Right ventricle myocardium superior (tissue), 1 donor: ENCODE measurements at regions of chr2 and their contacts with region 1.

Region 1: GRCh38 chr2:136378712-136379595 is 261.0 kb upstream of the CXCR4 start:
- DNase-seq: no peak
- ATAC-seq: peak; percentile 71

Region 2: DNA sequence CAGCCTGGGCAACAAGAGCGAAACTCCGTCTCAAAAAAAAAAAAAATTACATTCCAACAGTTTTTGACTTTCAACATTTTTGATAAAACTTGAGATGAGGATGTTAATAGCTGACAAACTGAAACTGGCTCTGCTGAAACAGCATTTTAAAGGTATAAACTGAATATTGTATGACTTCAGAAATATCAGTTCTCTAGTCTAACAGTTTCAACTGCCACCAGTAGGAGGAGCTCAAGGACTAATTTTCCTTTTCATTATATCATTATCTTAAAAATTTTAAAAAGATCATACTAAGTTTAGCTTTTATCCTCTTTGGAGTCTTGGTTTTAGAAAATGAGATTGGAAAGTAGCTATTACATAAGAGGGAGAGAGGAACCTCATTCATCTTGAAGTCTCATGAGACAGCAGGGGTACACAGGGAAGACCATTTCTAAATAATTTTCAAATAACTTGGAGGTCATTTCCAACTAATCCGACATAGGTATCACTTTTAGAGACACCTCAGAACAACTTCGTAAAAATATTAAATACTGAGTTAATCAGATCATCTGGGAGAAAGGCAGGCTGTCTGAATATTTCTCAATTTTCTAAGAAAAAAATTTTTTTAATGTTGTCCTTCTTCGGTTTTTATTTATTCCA is 465.1 kb before region 1 on chr2:
- intact Hi-C with region 1: loop called (anchors 2 kb)
- DNase-seq: no peak
- ATAC-seq: no peak

Region 3: DNA sequence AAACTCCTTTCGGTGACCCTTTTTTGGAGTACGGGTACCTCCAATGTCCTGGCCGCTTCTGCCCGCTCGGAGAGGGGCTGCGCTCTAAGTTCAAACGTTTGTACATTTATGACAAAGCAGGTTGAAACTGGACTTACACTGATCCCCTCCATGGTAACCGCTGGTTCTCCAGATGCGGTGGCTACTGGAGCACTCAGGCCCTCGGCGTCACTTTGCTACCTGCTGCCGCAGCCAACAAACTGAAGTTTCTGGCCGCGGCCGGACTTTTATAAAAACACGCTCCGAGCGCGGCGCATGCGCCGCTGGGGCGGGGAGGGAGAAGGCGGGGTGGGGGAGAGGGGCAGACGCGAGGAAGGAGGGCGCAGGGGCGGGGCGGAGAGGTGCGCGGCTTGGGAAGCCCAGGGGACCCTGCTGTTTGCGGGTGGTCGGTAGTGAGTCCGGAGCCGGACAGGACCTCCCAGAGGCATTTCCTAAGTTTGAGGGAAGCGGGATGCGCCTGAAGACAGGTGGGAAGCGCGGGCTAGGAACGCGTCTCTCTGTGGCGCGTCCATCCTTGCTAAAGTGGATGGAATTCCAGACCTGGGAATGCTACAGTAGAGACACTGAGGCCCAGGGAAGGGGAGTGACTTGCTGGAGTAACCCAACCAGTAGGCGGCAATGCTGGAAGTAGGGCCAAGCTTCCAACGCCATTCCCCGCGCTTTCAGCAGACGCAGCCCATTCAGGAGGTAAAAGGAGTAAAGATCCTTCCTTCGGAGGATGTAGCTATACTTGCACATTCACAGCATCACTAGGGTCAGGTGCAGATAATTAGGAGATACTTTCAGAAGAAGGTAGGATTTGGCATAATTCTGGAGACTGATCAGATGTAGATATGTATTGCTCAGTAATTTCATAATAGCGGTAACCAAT is 260.8 kb before region 1 on chr2 and contains the start of gene CXCR4:
- intact Hi-C with region 1: loop called (anchors 10 kb)
- DNase-seq: peak; percentile 85
- ATAC-seq: peak; percentile 67
- total RNA-seq, gene CXCR4: 2.0 TPM

Region 4: GRCh38 chr2:138023298-138023697 is 1644.3 kb after region 1 on chr2:
- intact Hi-C with region 1: no loop called
- DNase-seq: no peak
- ATAC-seq: no peak